ENCODE measurements at regions of chr17 and their contacts with region 1.

Region 1: GRCh38 chr17:41777574-41778188 is 8.8 kb downstream of the JUP start:
- DNase-seq: peak; percentile 86
- ATAC-seq: peak; percentile 55

Region 2: DNA sequence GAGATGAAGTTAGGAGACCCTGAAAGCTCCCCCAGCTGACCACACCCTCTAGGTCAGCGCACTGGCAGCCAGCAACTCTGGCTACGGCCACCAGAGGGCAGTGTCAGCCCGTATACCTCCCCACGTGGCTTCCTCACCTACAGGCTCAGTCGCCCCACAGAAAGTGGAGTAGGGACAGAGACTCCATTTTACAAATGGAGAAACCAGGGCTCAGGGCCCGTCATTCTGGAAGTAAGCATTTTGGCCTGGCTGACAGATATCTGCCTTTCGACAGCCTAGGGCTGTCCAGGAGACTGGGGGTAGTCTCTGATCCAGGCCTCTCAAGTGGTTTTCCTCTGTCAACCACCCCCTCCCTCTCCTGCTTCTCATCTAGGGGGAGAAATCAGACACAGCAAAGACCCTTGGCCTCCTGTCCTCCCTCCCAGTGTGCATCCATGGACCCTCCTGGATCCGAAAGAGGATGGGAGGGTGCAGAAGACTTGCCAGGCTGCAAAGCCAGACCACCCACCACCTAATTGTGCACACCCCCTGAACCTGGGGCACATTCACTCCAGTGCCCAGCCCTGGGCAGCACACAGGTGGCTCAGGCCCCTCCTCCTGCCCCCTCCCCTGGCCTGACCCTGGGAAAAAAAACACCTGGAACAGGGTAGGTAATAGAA is 39.5 kb before region 1 on chr17:
- intact Hi-C with region 1: loop called (anchors 5 kb)
- DNase-seq: peak; percentile 91
- ATAC-seq: peak; percentile 90

Region 3: GRCh38 chr17:41792845-41793783 is 15.4 kb after region 1 on chr17:
- intact Hi-C with region 1: loop called (anchors 2 kb)
- DNase-seq: peak; percentile 70
- ATAC-seq: peak; percentile 88

Region 4: GRCh38 chr17:41811549-41812380 is 34.1 kb after region 1 on chr17 and contains the start of gene P3H4:
- intact Hi-C with region 1: loop called (anchors 1 kb)
- DNase-seq: peak; percentile 88
- ATAC-seq: peak; percentile 87
- total RNA-seq, gene P3H4: 7.8 TPM

Region 5: GRCh38 chr17:41917192-41917591 is 139.5 kb after region 1 on chr17:
- intact Hi-C with region 1: no loop called
- DNase-seq: no peak
- ATAC-seq: no peak

Measured in Right ventricle myocardium inferior (tissue), 1 donor.